Activated B cell treated with CpG ODN at 0.5 μM for 24 hours (primary cell): ENCODE measurements at regions of chr13 and their contacts with region 1.

Region 1: DNA sequence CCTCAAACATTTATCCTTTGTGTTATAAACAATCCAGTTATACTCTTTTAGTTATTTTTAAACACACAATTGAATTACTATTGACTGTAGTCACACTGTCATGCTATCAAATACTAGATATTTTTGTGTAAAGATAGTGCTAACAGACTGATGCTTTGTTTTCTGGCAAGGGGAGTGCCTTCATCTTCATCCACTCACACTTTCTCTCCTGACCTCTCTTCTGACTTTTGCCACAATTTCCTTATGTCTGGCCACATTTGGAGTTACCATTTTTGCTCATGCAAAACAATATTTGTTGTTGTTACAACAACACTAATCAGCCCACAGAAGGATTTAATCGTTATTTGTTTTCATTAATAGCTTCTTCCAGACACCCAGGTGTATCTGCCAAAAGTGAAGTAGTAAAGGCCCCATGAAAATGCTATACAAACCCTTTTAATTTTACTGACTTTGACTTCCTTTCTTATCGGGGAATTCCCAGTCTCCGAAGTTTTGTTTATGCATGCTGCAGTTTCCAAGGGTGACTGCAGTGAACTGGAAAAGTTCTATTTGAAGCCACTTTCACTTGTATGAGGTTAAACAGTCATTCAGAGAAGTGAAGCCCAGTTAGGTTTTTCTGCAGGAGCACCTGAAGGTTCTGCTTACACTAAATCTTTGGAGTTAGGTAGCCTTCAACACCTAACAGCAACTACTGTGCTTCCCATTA is 66.1 kb upstream of the FRY start:
- DNase-seq: no peak
- ATAC-seq: peak; percentile 89
- H3K4me3 Mint-ChIP-seq: peak overlapping the region; percentile 30
- H3K27ac Mint-ChIP-seq: peak overlapping the region; percentile 91
- H3K4me1 Mint-ChIP-seq: peaks cover 46% of the 10 kb centered on the region
- H3K27me3 Mint-ChIP-seq: no peaks in the 10 kb centered on the region
- CTCF ChIP-seq: no peak

Region 2: GRCh38 chr13:31846182-31846950 is 119.1 kb before region 1 on chr13:
- CTCF ChIA-PET with region 1: no interaction called
- POLR2A ChIA-PET with region 1: no interaction called
- intact Hi-C with region 1: loop called (anchors 2 kb)
- DNase-seq: peak; percentile 80
- ATAC-seq: peak; percentile 98
- H3K4me3 Mint-ChIP-seq: peak overlapping the region; percentile 83
- H3K27ac Mint-ChIP-seq: no peak overlapping the region
- H3K4me1 Mint-ChIP-seq: peaks cover 9% of the 10 kb centered on the region
- H3K27me3 Mint-ChIP-seq: peaks cover 27% of the 10 kb centered on the region
- CTCF ChIP-seq: no peak

Region 3: GRCh38 chr13:31882794-31883193 is 82.7 kb before region 1 on chr13:
- CTCF ChIA-PET with region 1: no interaction called
- POLR2A ChIA-PET with region 1: no interaction called
- intact Hi-C with region 1: loop called (anchors 1 kb)
- DNase-seq: no peak
- ATAC-seq: peak; percentile 79
- H3K4me3 Mint-ChIP-seq: no peak overlapping the region
- H3K27ac Mint-ChIP-seq: peak overlapping the region; percentile 57
- H3K4me1 Mint-ChIP-seq: peaks cover 16% of the 10 kb centered on the region
- H3K27me3 Mint-ChIP-seq: peaks cover 3% of the 10 kb centered on the region
- CTCF ChIP-seq: no peak

Region 4: DNA sequence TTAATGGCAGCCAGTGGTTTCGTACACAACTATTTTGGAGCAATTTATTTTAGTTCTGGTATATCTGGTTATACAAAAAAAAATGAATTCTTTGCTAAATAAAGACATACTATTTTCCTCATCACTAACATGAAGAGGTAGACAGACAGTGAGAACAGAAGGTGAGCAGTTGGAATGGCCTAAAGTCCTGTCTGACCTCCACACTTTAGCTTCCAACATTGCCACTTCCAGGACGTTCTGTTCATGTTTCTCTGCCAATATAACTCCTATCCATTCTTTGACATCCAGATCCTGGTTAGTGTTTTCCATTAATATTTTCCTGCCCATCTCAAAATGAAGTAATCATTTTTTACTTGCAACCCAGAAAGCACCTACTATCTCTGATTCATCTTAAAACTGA is 46.8 kb before region 1 on chr13:
- CTCF ChIA-PET with region 1: no interaction called
- POLR2A ChIA-PET with region 1: no interaction called
- intact Hi-C with region 1: no loop called
- DNase-seq: no peak
- ATAC-seq: no peak
- H3K4me3 Mint-ChIP-seq: no peak overlapping the region
- H3K27ac Mint-ChIP-seq: no peak overlapping the region
- H3K4me1 Mint-ChIP-seq: peaks cover 9% of the 10 kb centered on the region
- H3K27me3 Mint-ChIP-seq: no peaks in the 10 kb centered on the region
- CTCF ChIP-seq: no peak

Region 5: DNA sequence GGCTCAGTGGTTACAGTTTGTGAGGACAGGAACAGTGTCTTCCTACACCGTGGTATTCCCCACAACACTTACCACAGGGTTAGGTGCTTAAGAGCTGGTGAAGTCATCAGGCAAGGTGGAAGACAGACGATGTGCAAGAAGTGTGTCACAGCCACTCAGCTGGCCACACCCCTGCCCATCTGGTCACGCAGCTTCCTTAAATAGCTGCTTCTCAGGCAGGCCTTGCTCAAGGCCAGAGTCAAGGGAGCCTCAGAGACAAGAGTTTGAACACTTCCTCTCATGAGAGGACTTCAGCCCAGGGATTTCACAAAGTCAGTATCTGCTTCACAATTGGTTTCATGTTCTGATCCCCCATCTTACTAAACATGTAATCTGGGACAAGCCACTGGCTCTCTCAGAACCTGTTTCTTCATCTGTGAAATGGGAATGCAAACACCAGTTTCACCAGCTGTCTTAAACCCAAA is 14.3 kb before region 1 on chr13:
- CTCF ChIA-PET with region 1: no interaction called
- POLR2A ChIA-PET with region 1: interaction called, 7 read pairs
- intact Hi-C with region 1: loop called (anchors 1 kb)
- DNase-seq: peak; percentile 34
- ATAC-seq: peak; percentile 87
- H3K4me3 Mint-ChIP-seq: no peak overlapping the region
- H3K27ac Mint-ChIP-seq: peak overlapping the region; percentile 86
- H3K4me1 Mint-ChIP-seq: peaks cover 21% of the 10 kb centered on the region
- H3K27me3 Mint-ChIP-seq: no peaks in the 10 kb centered on the region
- CTCF ChIP-seq: no peak

Region 6: GRCh38 chr13:31987535-31988170 is 22.1 kb after region 1 on chr13:
- CTCF ChIA-PET with region 1: no interaction called
- POLR2A ChIA-PET with region 1: no interaction called
- intact Hi-C with region 1: loop called (anchors 2 kb)
- DNase-seq: no peak
- ATAC-seq: peak; percentile 71
- H3K4me3 Mint-ChIP-seq: no peak overlapping the region
- H3K27ac Mint-ChIP-seq: no peak overlapping the region
- H3K4me1 Mint-ChIP-seq: peaks cover 9% of the 10 kb centered on the region
- H3K27me3 Mint-ChIP-seq: no peaks in the 10 kb centered on the region
- CTCF ChIP-seq: no peak

Region 7: GRCh38 chr13:32001185-32001768 is 35.8 kb after region 1 on chr13:
- CTCF ChIA-PET with region 1: no interaction called
- POLR2A ChIA-PET with region 1: no interaction called
- intact Hi-C with region 1: loop called (anchors 5 kb)
- DNase-seq: no peak
- ATAC-seq: peak; percentile 61
- H3K4me3 Mint-ChIP-seq: no peak overlapping the region
- H3K27ac Mint-ChIP-seq: no peak overlapping the region
- H3K4me1 Mint-ChIP-seq: peaks cover 2% of the 10 kb centered on the region
- H3K27me3 Mint-ChIP-seq: no peaks in the 10 kb centered on the region
- CTCF ChIP-seq: no peak

Region 8: GRCh38 chr13:32427852-32428580 is 462.5 kb after region 1 on chr13 and contains the start of gene N4BP2L1:
- CTCF ChIA-PET with region 1: no interaction called
- POLR2A ChIA-PET with region 1: no interaction called
- intact Hi-C with region 1: loop called (anchors 2 kb)
- DNase-seq: peak; percentile 77
- ATAC-seq: peak; percentile 73
- H3K4me3 Mint-ChIP-seq: peak within 1 kb of the TSS; percentile 95
- H3K27ac Mint-ChIP-seq: peak within 1 kb of the TSS; percentile 99
- H3K4me1 Mint-ChIP-seq: peaks cover 48% of the 10 kb centered on the region
- H3K27me3 Mint-ChIP-seq: no peaks in the 10 kb centered on the region
- CTCF ChIP-seq: no peak
- total RNA-seq, gene N4BP2L1: 23.0 and 24.3 TPM in 2 replicates